Activated naive CD4-positive, alpha-beta T cell treated with anti-CD3 and anti-CD28 coated beads for 36 hours (primary cell): ENCODE measurements at regions of chr1 and their contacts with region 1.

Region 1: GRCh38 chr1:228102791-228103620 is at the start of gene C1orf35:
- DNase-seq: peak; percentile 96
- H3K4me3 Mint-ChIP-seq: peak within 1 kb of the TSS; percentile 92
- H3K27ac Mint-ChIP-seq: peak within 1 kb of the TSS; percentile 87
- H3K4me1 Mint-ChIP-seq: peaks cover 28% of the 10 kb centered on the region
- H3K27me3 Mint-ChIP-seq: no peaks in the 10 kb centered on the region
- total RNA-seq, gene C1orf35: 14.5 to 16.2 TPM

Region 2: DNA sequence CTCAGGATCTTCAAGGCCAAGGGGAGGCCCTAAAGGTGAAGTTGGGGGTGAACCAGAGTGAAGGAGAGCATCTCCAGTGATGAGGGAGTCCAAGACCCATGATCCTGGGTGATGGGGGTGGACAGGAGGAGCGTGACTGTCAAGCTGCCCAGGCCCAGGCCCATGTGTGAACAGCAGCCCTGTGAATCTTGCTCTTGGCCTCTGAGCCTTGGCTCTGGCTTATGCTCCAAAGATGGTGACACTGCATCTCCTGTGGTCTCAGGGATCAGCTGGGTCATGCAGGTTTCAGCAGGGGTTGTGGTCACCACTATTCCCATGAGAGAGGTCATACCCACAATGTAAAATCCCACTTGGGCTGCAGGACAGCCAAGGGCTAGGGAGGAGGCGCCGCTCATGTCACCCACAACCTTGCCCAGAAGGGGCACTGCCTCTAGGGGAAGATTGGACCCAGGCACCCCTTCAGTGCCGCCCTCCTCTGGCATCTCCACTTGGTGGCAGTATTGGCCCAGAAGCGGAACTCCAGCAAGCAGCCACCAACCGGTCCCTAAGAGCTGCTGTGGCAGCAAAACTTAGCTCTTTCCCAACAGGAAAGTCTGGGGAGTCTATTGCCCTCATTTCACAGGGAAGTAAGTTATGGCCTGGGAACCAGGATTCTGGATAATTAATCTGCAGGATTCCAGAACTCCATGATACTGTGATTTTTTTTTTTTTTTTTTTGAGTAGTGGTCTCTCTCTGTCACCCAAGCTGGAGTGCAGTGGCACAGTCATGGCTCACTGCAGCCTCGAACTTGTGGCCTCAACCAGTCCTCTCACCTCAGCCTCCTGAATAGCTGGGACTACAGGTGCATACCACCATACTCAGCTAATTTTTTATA is 103.7 kb before region 1 on chr1:
- CTCF ChIA-PET with region 1: interaction called, 3 read pairs
- intact Hi-C with region 1: loop called (anchors 1 kb)
- DNase-seq: peak; percentile 86
- H3K4me3 Mint-ChIP-seq: no peak overlapping the region
- H3K27ac Mint-ChIP-seq: no peak overlapping the region
- H3K4me1 Mint-ChIP-seq: no peaks in the 10 kb centered on the region
- H3K27me3 Mint-ChIP-seq: peaks cover 26% of the 10 kb centered on the region

Region 3: DNA sequence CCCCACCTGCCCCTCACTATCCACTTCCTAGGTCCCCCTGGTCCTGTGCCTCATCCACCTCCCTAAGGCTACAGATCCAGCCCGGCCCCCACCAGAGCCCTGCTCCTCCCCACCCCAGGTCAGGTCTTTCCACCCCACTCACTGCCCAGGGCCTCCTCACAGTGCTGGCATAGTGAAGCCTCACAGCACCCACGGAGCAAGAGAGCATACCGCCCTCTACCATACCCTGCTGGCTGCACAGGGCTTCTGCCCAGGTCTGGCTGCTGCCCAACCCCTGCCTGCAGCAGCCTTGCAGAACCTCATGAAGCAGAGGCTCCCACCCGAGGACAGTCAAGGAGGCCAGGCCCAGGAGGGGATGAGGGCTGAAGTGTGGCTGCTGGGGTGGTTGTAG is 40.2 kb before region 1 on chr1:
- CTCF ChIA-PET with region 1: no interaction called
- intact Hi-C with region 1: loop called (anchors 1 kb)
- DNase-seq: no peak
- H3K4me3 Mint-ChIP-seq: no peak overlapping the region
- H3K27ac Mint-ChIP-seq: no peak overlapping the region
- H3K4me1 Mint-ChIP-seq: peaks cover 8% of the 10 kb centered on the region
- H3K27me3 Mint-ChIP-seq: peaks cover 34% of the 10 kb centered on the region

Region 4: GRCh38 chr1:228082135-228082891 is 20.7 kb before region 1 on chr1 and contains the start of gene ARF1:
- CTCF ChIA-PET with region 1: interaction called, 3 read pairs
- intact Hi-C with region 1: loop called (anchors 1 kb)
- DNase-seq: peak; percentile 89
- H3K4me3 Mint-ChIP-seq: peak within 1 kb of the TSS; percentile 93
- H3K27ac Mint-ChIP-seq: peak within 1 kb of the TSS; percentile 96
- H3K4me1 Mint-ChIP-seq: peaks cover 50% of the 10 kb centered on the region
- H3K27me3 Mint-ChIP-seq: no peaks in the 10 kb centered on the region
- total RNA-seq, gene ARF1: 346 to 358 TPM

Region 5: DNA sequence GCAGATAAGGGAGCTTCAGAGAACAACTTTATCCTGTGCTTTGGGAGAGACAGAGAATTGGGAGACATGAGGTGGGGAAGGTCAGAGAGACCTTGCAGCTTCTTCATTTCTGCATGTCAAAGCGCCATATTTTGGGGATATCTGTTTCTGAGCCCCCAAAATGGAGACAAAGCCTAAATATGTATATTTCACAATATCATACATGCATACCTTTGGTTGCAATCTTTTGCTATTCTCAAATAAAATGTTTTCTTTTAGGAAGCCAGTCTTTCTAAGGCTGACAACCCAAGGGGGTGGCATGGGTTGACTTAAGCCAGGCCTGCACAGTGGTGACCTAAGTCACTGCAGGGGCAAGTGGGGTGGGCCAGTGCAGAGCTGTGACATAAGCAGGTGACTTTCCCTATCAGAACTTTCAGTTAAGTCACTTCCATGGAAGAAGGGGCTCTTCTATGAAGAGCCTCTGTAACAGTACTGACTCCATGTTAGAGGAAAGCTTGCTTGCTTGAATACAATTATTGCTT is 20.0 kb after region 1 on chr1:
- CTCF ChIA-PET with region 1: no interaction called
- intact Hi-C with region 1: no loop called
- DNase-seq: no peak
- H3K4me3 Mint-ChIP-seq: no peak overlapping the region
- H3K27ac Mint-ChIP-seq: no peak overlapping the region
- H3K4me1 Mint-ChIP-seq: peaks cover 4% of the 10 kb centered on the region
- H3K27me3 Mint-ChIP-seq: no peaks in the 10 kb centered on the region

Region 6: GRCh38 chr1:228150461-228151179 is 47.6 kb after region 1 on chr1:
- CTCF ChIA-PET with region 1: no interaction called
- intact Hi-C with region 1: no loop called
- DNase-seq: no peak
- H3K4me3 Mint-ChIP-seq: no peak overlapping the region
- H3K27ac Mint-ChIP-seq: no peak overlapping the region
- H3K4me1 Mint-ChIP-seq: peaks cover 10% of the 10 kb centered on the region
- H3K27me3 Mint-ChIP-seq: no peaks in the 10 kb centered on the region

Region 7: GRCh38 chr1:228457396-228458176 is 354.6 kb after region 1 on chr1:
- CTCF ChIA-PET with region 1: no interaction called
- intact Hi-C with region 1: no loop called
- DNase-seq: peak; percentile 93
- H3K4me3 Mint-ChIP-seq: peak overlapping the region; percentile 95
- H3K27ac Mint-ChIP-seq: peak overlapping the region; percentile 97
- H3K4me1 Mint-ChIP-seq: peaks cover 32% of the 10 kb centered on the region
- H3K27me3 Mint-ChIP-seq: peaks cover 7% of the 10 kb centered on the region